ENCODE measurements at regions of chr5 and their contacts with region 1.

Region 1: GRCh38 chr5:71734141-71734540 is 15.1 kb downstream of the CARTPT start:
- DNase-seq: no peak

Region 2: GRCh38 chr5:71719063-71719964 is 14.8 kb before region 1 on chr5 and contains the start of gene CARTPT:
- CTCF ChIA-PET with region 1: no interaction called
- POLR2A ChIA-PET with region 1: no interaction called
- DNase-seq: no peak

Region 3: DNA sequence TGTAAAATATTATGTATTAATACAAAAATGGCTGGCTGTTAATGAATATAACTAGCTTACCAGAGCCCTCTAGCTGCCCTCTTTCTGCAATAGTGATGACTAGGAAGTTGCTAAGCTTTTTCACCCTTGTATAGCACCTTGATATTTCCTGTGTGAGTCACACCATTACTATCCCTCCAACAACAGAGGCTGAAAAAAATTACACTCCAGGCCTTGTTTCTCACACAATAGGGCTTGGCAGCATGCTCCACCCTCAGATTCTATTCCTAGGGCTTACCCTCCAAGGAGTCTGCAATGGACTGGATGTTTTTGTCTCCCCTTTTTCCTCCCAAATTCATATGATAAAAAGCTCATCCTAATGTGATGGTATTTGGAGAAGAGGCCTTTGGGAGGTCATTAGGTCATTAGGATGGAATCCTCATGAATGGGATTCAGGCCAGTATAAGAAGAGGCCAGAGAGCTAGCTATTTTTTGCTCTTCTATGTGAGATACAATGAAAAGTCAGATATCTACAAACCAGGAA is 188.5 kb after region 1 on chr5:
- CTCF ChIA-PET with region 1: no interaction called
- POLR2A ChIA-PET with region 1: no interaction called
- DNase-seq: no peak

Region 4: DNA sequence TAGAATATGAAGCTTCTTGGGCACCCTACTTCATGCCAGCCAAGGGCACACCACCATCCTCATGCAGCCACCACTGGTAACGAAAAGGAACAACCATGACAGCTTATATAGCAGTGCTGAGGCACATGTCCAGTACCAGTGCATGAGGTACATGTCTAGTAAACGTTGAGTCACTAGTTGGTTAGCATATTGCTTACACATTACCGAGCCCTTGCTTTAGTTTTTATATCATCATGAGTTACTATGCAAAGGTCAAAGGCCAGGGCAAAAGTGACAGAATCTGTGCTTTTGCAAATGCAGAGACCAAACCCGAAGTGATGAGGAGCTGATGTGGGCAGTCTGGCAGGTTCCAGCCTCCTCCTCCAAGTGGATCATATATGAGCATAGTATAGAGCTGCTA is 226.1 kb after region 1 on chr5:
- CTCF ChIA-PET with region 1: interaction called, 10 read pairs
- POLR2A ChIA-PET with region 1: no interaction called
- DNase-seq: no peak